Common myeloid progenitor, CD34-positive (primary cell): ENCODE measurements at regions of chr18 and their contacts with region 1.

Region 1: GRCh38 chr18:11995445-11996189 is 14.3 kb downstream of the IMPA2 start:
- DNase-seq: peak; percentile 81 to 85 (median 82)
- H3K4me3 ChIP-seq: peak overlapping the region in 4 of 7 experiments; percentile 4 to 52 (median 30)
- H3K27ac ChIP-seq: no peak overlapping the region
- H3K4me1 ChIP-seq: peaks cover 4 to 28% (median 23%) of the 10 kb centered on the region in 4 experiments
- H3K27me3 ChIP-seq: no peaks in the 10 kb centered on the region

Region 2: GRCh38 chr18:11733031-11733430 is 262.6 kb before region 1 on chr18:
- CTCF ChIA-PET with region 1: interaction called, 20 read pairs
- POLR2A ChIA-PET with region 1: no interaction called
- DNase-seq: peak; percentile 57 to 74 (median 71)
- H3K4me3 ChIP-seq: peak overlapping the region in 5 of 7 experiments; percentile 12 to 56 (median 43)
- H3K27ac ChIP-seq: no peak overlapping the region
- H3K4me1 ChIP-seq: peaks cover 0 to 3% (median 1%) of the 10 kb centered on the region in 4 experiments
- H3K27me3 ChIP-seq: peaks cover 0 to 27% (median 8%) of the 10 kb centered on the region in 5 experiments

Region 3: GRCh38 chr18:11947214-11948191 is 48.1 kb before region 1 on chr18:
- CTCF ChIA-PET with region 1: interaction called, 667 read pairs
- POLR2A ChIA-PET with region 1: interaction called, 3 read pairs
- DNase-seq: peak; percentile 96 to 99 (median 98)
- H3K4me3 ChIP-seq: peak overlapping the region; percentile 62 to 81 (median 69)
- H3K27ac ChIP-seq: peak overlapping the region; percentile 88 to 94
- H3K4me1 ChIP-seq: peaks cover 4 to 33% (median 21%) of the 10 kb centered on the region in 4 experiments
- H3K27me3 ChIP-seq: no peaks in the 10 kb centered on the region

Region 4: GRCh38 chr18:11980555-11981382 is 14.8 kb before region 1 on chr18:
- CTCF ChIA-PET with region 1: interaction called, 27 read pairs
- POLR2A ChIA-PET with region 1: no interaction called
- DNase-seq: peak; percentile 97 to 99 (median 99)
- H3K4me3 ChIP-seq: peak overlapping the region; percentile 53 to 84 (median 68)
- H3K27ac ChIP-seq: peak overlapping the region in 1 of 2 experiments; percentile 68
- H3K4me1 ChIP-seq: peaks cover 10 to 46% (median 34%) of the 10 kb centered on the region in 4 experiments
- H3K27me3 ChIP-seq: no peaks in the 10 kb centered on the region

Region 5: GRCh38 chr18:12011957-12012549 is 16.4 kb after region 1 on chr18:
- CTCF ChIA-PET with region 1: interaction called, 10 read pairs
- POLR2A ChIA-PET with region 1: interaction called, 3 read pairs
- DNase-seq: no peak
- H3K4me3 ChIP-seq: no peak overlapping the region
- H3K27ac ChIP-seq: no peak overlapping the region
- H3K4me1 ChIP-seq: no peaks in the 10 kb centered on the region
- H3K27me3 ChIP-seq: no peaks in the 10 kb centered on the region

Region 6: GRCh38 chr18:12066910-12067511 is 71.4 kb after region 1 on chr18:
- CTCF ChIA-PET with region 1: no interaction called
- POLR2A ChIA-PET with region 1: no interaction called
- DNase-seq: no peak
- H3K4me3 ChIP-seq: no peak overlapping the region
- H3K27ac ChIP-seq: no peak overlapping the region
- H3K4me1 ChIP-seq: peaks cover 0 to 3% (median 0%) of the 10 kb centered on the region in 4 experiments
- H3K27me3 ChIP-seq: no peaks in the 10 kb centered on the region